Thyroid gland (tissue), 4 donors: ENCODE measurements at regions of chr1 and their contacts with region 1.

Region 1: DNA sequence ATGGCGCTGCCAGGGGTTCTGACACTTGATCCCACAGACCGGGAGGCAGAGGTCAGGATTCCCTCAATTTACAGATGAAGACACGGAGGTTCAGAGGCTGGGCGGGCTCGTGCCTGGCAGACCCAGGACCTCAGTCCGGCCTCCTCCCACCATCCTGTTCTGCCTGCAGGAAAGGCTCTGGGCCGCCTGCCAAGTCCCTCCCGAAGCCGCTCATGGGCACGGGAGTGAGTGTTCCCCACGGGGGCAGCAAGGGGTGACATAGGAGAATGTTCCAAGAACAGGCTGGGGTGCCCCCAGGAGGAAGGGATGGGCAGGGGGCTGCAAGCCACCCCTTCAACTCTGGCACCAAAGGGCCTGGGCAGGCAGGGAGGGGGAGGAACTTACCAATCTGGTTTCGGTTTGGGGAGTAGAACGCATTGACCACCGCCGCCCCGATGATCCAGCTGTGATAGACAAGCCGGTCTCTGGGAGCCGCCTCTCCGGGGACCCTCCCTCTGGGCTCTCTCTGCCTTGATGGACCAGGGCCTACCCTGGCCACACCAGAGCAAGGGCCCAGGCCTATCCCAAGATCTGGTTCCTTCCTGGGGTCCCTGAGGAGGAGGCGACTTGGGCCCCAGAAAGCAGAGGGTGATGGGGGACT is 7.5 kb downstream of the PRXL2B start:
- DNase-seq: peak; percentile 87 to 88
- H3K4me3 ChIP-seq: peak overlapping the region in 1 of 3 donors; percentile 23
- H3K27ac ChIP-seq: no peak overlapping the region
- H3K4me1 ChIP-seq: peaks cover 0 to 14% of the 10 kb centered on the region in 2 donors
- H3K27me3 ChIP-seq: no peaks in the 10 kb centered on the region
- CTCF ChIP-seq: no peak
- POLR2A ChIP-seq: no peak

Region 2: DNA sequence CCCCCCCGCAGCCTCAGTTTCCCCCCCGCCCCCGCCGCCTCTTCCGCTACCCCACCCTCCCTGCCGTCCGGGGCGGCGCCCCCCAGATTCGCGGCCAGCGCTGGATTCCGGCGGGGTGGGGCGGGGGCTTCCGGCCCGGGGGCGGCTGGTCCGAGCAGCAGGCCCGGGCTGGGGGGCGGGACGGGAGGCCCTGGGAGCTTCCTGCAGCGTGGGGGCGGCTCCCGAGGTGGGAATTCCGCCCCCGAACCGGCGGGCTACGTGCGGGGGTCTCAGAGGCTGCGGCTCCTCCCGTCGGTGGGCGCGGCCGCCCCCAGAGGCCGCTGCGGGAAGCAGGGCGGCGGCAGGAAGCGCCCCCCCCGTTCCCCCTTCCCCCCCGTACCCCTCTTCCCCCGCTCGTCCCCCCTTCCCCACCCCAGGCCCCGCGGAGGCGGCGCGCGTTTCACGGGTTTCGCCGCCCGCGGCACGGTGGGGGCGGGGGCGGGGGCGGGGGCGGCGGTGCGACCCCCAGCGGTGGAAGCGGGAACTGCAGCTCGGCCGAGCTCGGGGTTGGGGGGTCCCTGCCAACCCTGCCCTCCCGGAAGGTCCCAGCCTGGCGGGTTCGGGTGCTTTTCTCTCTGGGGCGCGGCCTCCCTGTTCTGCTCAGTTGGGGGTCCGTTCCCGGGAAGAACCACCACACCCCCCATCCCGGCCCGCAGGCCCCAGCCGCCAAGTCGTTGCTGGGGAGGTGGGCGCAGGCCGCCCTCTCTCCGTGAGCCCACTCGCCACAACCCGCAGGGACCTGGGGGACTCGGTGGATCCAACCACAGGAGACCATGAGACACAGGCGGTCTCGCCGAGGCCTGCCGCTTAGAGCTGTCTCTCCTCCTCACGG is 279.1 kb before region 1 on chr1:
- intact Hi-C with region 1: no loop called
- DNase-seq: peak; percentile 56 to 65
- H3K4me3 ChIP-seq: peak overlapping the region in 2 of 3 donors; percentile 32 to 71
- H3K27ac ChIP-seq: peak overlapping the region; percentile 95 to 96 (median 96)
- H3K4me1 ChIP-seq: peaks cover 22 to 78% of the 10 kb centered on the region in 2 donors
- H3K27me3 ChIP-seq: no peaks in the 10 kb centered on the region
- CTCF ChIP-seq: peak; percentile 45 to 100 (median 79)
- POLR2A ChIP-seq: no peak

Region 3: GRCh38 chr1:2636733-2637132 is 42.6 kb after region 1 on chr1:
- intact Hi-C with region 1: loop called (anchors 5 kb)
- DNase-seq: no peak
- H3K4me3 ChIP-seq: no peak overlapping the region
- H3K27ac ChIP-seq: no peak overlapping the region
- H3K4me1 ChIP-seq: peaks cover 3 to 6% of the 10 kb centered on the region in 2 donors
- H3K27me3 ChIP-seq: no peaks in the 10 kb centered on the region
- CTCF ChIP-seq: no peak
- POLR2A ChIP-seq: no peak